ENCODE measurements at regions of chr3 and their contacts with region 1.

Region 1: DNA sequence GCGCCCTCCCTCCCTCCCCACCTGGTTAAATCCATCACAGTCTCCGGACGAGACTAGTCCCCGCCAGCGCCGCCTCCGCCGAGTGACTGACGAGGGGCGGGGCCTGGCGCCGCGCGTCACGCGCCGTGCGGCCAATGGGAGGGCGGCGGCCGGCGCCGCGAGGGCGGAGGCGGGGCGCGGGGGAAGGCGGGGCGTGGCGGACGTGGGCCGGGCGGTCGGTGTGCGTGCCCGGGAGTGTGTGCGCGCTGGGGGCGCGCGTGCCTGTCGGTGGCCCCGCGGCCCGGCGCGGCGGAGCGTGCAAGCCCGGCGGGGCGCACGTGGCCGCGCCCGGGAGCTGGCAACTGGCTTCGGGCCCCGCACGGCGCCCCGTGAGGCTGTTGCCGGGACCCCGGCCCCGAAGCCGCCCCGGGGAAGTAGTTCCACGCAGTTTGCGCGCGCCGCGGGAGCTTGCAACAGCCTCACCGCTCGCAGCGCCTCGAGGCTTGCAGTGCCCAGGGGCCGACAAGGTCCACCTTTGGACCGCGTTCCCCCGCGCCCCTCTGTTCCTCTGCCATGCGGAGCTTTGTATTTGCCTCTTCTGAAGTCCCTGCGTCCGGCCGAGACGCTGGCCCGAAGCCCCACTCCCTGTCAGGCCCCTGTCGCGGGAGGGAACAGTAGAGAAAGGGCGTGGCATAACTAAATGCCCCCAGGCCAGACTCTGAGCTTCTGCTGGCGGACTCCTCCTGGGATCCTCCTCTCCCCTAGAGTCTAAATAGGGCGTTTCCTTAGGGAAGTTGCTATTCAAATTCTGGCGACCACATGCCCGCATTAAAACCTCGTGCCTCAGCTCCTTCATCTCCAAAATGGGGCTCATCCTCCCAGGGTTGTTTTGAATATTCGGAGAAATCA is 400.9 kb downstream of the SHQ1 start:
- DNase-seq: peak in 1 of 2 donors; percentile 92
- H3K4me3 ChIP-seq: peak overlapping the region; percentile 73 to 87
- H3K27ac ChIP-seq: peak overlapping the region; percentile 87
- H3K4me1 ChIP-seq: peaks cover 42% of the 10 kb centered on the region
- H3K27me3 ChIP-seq: no peaks in the 10 kb centered on the region
- CTCF ChIP-seq: peak in 1 of 3 experiments; percentile 9
- POLR2A ChIP-seq: peak in 1 of 2 donors; percentile 44

Region 2: DNA sequence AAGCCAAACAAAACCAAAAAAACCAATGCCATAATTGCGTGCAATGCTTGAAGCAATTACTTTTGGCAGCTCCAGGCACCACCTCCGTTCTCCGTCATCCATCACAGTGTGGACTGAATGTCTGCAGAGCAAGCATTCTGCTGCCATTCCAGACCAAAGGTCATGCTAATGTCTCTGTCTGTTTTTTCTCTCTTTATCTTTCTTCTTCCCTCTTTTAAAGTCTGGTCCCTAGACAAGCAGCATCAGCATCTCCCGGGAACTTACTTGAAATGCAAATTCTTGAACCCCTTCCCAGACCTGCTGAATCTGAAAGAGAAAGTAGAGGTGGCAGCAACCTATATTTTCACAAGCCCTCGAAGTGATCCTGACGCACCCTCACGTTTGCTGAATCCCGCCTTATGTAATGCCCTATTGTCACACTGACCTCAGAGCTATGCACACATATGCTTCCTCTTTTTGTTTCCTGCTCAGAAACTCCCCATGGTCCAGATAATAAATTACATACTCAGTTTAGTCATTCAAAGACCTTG is 365.1 kb before region 1 on chr3:
- intact Hi-C with region 1: loop called (anchors 5 kb)
- DNase-seq: no peak
- H3K4me3 ChIP-seq: no peak overlapping the region
- H3K27ac ChIP-seq: no peak overlapping the region
- H3K4me1 ChIP-seq: peaks cover 7% of the 10 kb centered on the region
- H3K27me3 ChIP-seq: no peaks in the 10 kb centered on the region
- CTCF ChIP-seq: no peak
- POLR2A ChIP-seq: no peak

Region 3: DNA sequence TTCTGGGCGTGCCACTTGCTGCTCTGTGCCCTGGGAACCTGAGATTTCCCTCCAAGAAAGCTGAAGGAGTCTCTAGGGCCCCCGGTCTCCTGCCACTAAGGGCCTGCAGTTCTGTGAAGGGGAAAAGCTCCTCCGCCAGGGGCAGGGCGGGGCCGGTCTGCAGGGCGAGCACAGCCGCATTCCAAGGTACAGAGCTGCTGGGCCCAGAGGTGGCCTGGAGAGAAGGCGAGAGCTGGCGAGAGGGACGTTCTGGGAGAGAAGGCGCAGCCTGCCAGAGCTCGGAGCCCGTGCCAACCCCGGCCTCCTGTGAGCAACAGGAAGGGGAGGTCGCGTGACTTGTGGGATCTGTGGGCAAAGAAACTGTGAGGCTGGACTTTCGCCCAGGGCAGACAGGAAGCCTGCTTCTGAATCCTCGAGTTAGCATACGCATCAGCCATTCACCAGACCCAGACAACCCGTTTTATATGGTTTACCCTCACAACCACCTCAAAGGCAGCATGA is 99.4 kb before region 1 on chr3:
- intact Hi-C with region 1: loop called (anchors 10 kb)
- DNase-seq: no peak
- H3K4me3 ChIP-seq: no peak overlapping the region
- H3K27ac ChIP-seq: no peak overlapping the region
- H3K4me1 ChIP-seq: peaks cover 31% of the 10 kb centered on the region
- H3K27me3 ChIP-seq: no peaks in the 10 kb centered on the region
- CTCF ChIP-seq: no peak
- POLR2A ChIP-seq: no peak

Measured in vagina (tissue), 2 donors.